ENCODE measurements at regions of chr20 and their contacts with region 1.

Region 1: DNA sequence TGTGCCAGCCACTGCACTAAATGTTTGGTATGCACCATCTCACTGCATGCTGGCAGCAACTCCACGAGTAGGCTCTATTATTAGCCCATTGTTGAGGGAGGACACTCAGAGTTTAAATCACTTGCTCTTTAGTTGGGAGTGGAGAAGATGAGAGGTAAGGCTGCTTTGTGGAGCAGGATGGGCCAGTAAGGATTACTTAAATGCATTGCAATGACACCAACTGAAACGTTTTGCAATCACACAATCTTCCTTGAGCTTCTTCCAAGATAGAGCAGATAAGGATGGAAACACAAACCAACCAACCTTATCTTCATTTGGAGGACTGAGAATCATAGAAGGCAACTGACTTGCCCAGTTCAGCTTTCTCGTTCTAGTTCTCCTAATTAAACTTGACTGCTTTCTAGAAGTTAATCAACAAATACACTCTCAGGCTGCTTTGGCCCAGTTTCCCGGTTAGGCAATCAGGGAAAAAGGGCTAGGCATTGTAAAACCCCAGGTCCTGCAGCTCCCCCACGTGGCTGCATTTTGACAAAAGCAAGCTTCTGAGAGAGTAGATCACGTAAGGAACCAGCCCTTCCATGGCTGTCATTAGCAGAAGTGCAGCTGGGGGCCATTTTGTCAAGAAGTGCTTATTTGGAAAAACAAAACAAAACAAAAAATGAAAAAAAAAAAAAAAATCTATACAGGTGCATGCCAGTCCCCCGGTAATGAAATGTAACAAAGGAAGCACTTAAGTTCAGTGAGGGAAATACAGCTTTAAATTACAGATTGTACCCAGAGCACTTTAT is 130.6 kb downstream of the BCAS1 start:
- DNase-seq: peak; percentile 88
- ATAC-seq: peak; percentile 93
- H3K4me3 ChIP-seq: no peak overlapping the region
- H3K27ac ChIP-seq: no peak overlapping the region
- H3K4me1 ChIP-seq: peaks cover 0 to 22% of the 10 kb centered on the region in 2 experiments; a peak in 2 of 4 replicates
- H3K27me3 ChIP-seq: no peaks in the 10 kb centered on the region
- CTCF ChIP-seq: peak; percentile 74 to 85 (median 84)
- POLR2A ChIP-seq: no peak
- RAD21 ChIP-seq: peak; percentile 96

Region 2: DNA sequence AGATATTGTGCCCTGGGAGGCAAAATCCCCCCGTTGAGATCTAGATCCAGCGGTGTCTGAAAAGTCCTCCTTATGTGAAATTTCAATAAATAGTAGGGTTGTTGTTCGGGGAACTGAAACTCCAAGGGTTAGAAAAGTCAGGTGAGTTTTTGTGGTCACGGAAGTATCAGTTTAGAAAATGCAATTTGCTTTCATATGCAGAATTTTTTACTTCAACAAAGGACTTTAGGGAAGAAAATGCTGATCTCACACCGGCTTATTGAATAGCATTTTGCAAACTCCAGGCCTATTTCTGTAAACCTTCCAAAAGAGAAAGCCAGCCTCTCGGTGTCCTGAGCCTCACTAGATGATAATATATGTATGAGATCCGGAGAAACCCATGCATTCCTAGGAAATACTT is 712.9 kb before region 1 on chr20:
- CTCF ChIA-PET with region 1: no interaction called
- POLR2A ChIA-PET with region 1: no interaction called
- RAD21 ChIA-PET with region 1: no interaction called
- intact Hi-C with region 1: loop called (anchors 10 kb)
- DNase-seq: no peak
- ATAC-seq: no peak
- H3K4me3 ChIP-seq: no peak overlapping the region
- H3K27ac ChIP-seq: no peak overlapping the region
- H3K4me1 ChIP-seq: peaks cover 0 to 14% of the 10 kb centered on the region in 2 experiments; a peak in 2 of 4 replicates
- H3K27me3 ChIP-seq: peaks cover 11% of the 10 kb centered on the region
- CTCF ChIP-seq: no peak
- POLR2A ChIP-seq: no peak
- RAD21 ChIP-seq: no peak

Region 3: DNA sequence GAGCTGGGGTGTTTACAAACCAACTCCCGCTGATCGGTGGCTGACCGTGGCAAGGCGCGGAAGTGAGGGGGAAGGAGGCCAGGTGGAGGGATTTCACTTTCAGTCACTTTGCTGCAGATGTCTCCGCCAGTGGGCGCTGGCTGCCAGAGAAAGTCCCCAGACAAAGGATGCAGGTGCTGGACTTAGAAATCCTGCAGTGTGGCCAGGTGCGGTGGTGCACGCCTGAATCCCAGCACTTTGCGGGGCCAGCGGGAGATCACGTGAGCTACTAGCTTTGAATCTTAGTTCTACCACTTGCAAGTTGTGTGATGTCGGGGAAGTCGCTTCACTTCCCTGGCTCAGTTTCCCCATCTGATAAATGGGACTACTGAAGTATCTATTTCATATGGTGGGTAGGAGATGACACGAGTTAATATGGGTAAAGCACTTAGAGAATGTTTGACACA is 526.6 kb before region 1 on chr20:
- CTCF ChIA-PET with region 1: no interaction called
- POLR2A ChIA-PET with region 1: no interaction called
- RAD21 ChIA-PET with region 1: no interaction called
- intact Hi-C with region 1: loop called (anchors 2 kb)
- DNase-seq: peak; percentile 50
- ATAC-seq: peak; percentile 96
- H3K4me3 ChIP-seq: no peak overlapping the region
- H3K27ac ChIP-seq: no peak overlapping the region
- H3K4me1 ChIP-seq: no peaks in the 10 kb centered on the region
- H3K27me3 ChIP-seq: peaks cover 4% of the 10 kb centered on the region; the same call in 1 of the 2 replicates
- CTCF ChIP-seq: peak; percentile 50 to 66 (median 60); a peak in 5 of 6 replicates
- POLR2A ChIP-seq: no peak
- RAD21 ChIP-seq: peak; percentile 73

Region 4: DNA sequence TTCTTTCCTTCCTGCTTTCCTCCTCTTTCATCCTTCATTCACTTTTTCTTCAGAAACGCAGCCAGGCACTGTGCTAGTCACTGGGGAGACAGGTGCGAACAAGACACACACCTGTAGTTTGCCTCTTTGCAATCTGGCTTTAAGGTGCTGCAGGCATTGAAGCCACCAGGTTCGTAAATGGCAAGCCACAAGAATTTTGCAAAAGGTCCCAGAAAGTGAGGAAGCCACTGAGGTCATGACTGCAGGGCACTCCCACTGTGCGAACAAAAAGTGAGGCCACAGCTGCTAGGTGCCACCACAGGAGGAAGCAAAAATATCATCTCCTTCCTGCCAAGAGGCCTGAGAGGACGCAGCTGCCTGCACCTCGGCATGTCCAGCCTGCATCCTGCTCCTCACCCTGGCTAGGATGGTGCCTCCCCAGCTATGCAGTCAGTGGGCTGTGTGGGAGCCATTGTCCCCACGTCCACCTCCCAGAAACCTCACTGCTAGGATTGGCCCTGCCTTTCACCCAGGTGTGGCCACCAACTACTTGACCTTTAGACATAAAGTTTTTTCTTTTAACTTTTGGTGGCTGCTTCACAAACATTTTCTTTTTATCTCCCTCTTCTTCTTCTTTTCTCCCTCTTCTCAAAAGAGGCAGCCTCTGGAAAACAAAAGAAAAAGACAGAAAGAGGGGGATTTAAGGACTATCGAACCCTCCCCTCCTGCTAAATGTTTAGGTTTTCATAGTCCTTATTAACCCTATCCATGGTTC is 100.2 kb before region 1 on chr20:
- CTCF ChIA-PET with region 1: no interaction called
- POLR2A ChIA-PET with region 1: no interaction called
- RAD21 ChIA-PET with region 1: no interaction called
- intact Hi-C with region 1: no loop called
- DNase-seq: no peak
- ATAC-seq: peak; percentile 42; the same call in 1 of the 2 replicates
- H3K4me3 ChIP-seq: no peak overlapping the region
- H3K27ac ChIP-seq: no peak overlapping the region
- H3K4me1 ChIP-seq: peaks cover 7 to 20% of the 10 kb centered on the region in 2 experiments
- H3K27me3 ChIP-seq: no peaks in the 10 kb centered on the region
- CTCF ChIP-seq: no peak
- POLR2A ChIP-seq: no peak
- RAD21 ChIP-seq: no peak

Region 5: GRCh38 chr20:54062812-54063280 is 123.1 kb after region 1 on chr20:
- CTCF ChIA-PET with region 1: interaction called, 6 read pairs
- POLR2A ChIA-PET with region 1: no interaction called
- RAD21 ChIA-PET with region 1: interaction called in 1 of 2 experiments, 3 read pairs
- intact Hi-C with region 1: loop called (anchors 5 kb)
- DNase-seq: peak; percentile 42
- ATAC-seq: peak; percentile 64
- H3K4me3 ChIP-seq: no peak overlapping the region
- H3K27ac ChIP-seq: no peak overlapping the region
- H3K4me1 ChIP-seq: peaks cover 12 to 20% of the 10 kb centered on the region in 2 experiments
- H3K27me3 ChIP-seq: no peaks in the 10 kb centered on the region
- CTCF ChIP-seq: peak; percentile 57 to 71 (median 62)
- POLR2A ChIP-seq: no peak
- RAD21 ChIP-seq: peak; percentile 74

Region 6: DNA sequence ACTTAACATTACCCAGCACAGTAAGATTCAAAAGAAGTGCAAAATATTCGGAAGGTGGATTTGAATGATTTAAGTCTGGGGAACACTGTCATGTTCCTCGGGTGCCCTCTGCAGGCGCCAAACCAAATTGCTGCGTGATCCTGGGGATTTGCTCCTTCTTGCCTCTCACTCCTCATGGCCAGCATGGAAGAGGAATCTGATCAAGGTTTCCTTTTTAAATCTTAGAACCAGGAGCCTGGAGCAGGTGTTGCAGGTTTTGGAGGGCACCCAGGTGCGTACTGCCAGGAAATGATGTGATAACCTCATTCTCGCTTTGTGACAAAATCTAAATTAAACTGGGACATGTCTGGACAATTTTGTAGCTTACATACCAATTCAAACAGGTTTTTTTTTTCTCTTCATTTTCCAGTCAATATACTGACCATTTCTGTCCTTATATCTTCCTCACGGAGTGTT is 260.0 kb after region 1 on chr20:
- CTCF ChIA-PET with region 1: interaction called, 10 read pairs
- POLR2A ChIA-PET with region 1: no interaction called
- RAD21 ChIA-PET with region 1: no interaction called
- intact Hi-C with region 1: loop called (anchors 2 kb)
- DNase-seq: peak; percentile 71
- ATAC-seq: peak; percentile 60
- H3K4me3 ChIP-seq: no peak overlapping the region
- H3K27ac ChIP-seq: no peak overlapping the region; the same call in 1 of the 2 replicates
- H3K4me1 ChIP-seq: peaks cover 39 to 52% of the 10 kb centered on the region in 2 experiments
- H3K27me3 ChIP-seq: no peaks in the 10 kb centered on the region
- CTCF ChIP-seq: peak; percentile 77 to 95 (median 93)
- POLR2A ChIP-seq: no peak
- RAD21 ChIP-seq: peak; percentile 94

Region 7: DNA sequence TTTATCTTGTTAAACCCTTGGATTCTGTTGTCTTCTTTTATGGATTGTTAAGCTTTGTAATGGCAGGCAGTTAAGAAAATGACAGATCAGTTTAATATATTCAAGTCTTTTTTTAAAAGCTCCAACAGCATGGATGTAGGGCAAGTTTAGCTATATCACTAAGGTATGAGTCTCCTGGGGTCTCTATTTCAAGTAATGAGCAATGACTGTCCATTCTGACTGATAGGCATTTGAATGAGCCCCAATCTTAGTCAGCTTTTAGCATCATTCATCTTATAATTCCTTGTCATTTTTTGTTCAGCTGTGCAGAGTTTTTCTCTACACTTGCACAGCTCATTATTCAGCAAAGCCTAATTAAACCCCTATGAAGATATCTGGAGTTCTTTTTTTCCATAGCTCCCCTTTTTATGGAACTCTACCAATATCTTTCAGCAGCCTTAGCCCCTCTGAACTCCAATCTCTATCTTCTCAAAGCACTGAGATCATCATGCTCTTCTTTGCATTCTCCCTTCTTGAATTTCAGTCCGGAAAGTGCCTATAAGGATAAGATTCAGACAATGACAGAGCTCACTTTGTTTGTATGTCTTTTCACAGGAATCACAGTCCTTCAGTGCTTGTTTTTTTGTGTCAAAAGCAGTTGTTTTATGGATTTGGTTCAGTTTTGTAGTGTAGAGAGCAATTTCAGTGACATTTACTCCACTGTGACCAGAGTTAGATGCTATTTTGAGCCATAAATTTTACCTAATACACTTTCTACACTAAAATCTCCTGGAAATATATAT is 438.4 kb after region 1 on chr20:
- CTCF ChIA-PET with region 1: no interaction called
- POLR2A ChIA-PET with region 1: no interaction called
- RAD21 ChIA-PET with region 1: no interaction called
- intact Hi-C with region 1: no loop called
- DNase-seq: no peak
- ATAC-seq: no peak
- H3K4me3 ChIP-seq: no peak overlapping the region
- H3K27ac ChIP-seq: no peak overlapping the region
- H3K4me1 ChIP-seq: peaks cover 0 to 3% of the 10 kb centered on the region in 2 experiments; a peak in 1 of 4 replicates
- H3K27me3 ChIP-seq: no peaks in the 10 kb centered on the region; the same call in 1 of the 2 replicates
- CTCF ChIP-seq: no peak
- POLR2A ChIP-seq: no peak
- RAD21 ChIP-seq: no peak